Heart right ventricle (tissue), 16 donors: ENCODE measurements at regions of chrX and their contacts with region 1.

Region 1: GRCh38 chrX:43836435-43837184 is 45.6 kb downstream of the MAOB start:
- DNase-seq: no peak
- ATAC-seq: no peak
- H3K4me3 ChIP-seq: no peak overlapping the region
- H3K27ac ChIP-seq: no peak overlapping the region
- H3K4me1 ChIP-seq: peaks cover 0 to 10% (median 0%) of the 10 kb centered on the region in 9 donors
- H3K27me3 ChIP-seq: peaks cover 0 to 58% (median 0%) of the 10 kb centered on the region in 7 donors
- CTCF ChIP-seq: peak; percentile 19 to 71 (median 65)

Region 2: GRCh38 chrX:43618361-43619205 is 218.0 kb before region 1 on chrX:
- intact Hi-C with region 1: no loop called
- DNase-seq: no peak
- ATAC-seq: no peak
- H3K4me3 ChIP-seq: no peak overlapping the region
- H3K27ac ChIP-seq: no peak overlapping the region
- H3K4me1 ChIP-seq: no peaks in the 10 kb centered on the region
- H3K27me3 ChIP-seq: peaks cover 0 to 8% (median 0%) of the 10 kb centered on the region in 7 donors
- CTCF ChIP-seq: no peak

Region 3: DNA sequence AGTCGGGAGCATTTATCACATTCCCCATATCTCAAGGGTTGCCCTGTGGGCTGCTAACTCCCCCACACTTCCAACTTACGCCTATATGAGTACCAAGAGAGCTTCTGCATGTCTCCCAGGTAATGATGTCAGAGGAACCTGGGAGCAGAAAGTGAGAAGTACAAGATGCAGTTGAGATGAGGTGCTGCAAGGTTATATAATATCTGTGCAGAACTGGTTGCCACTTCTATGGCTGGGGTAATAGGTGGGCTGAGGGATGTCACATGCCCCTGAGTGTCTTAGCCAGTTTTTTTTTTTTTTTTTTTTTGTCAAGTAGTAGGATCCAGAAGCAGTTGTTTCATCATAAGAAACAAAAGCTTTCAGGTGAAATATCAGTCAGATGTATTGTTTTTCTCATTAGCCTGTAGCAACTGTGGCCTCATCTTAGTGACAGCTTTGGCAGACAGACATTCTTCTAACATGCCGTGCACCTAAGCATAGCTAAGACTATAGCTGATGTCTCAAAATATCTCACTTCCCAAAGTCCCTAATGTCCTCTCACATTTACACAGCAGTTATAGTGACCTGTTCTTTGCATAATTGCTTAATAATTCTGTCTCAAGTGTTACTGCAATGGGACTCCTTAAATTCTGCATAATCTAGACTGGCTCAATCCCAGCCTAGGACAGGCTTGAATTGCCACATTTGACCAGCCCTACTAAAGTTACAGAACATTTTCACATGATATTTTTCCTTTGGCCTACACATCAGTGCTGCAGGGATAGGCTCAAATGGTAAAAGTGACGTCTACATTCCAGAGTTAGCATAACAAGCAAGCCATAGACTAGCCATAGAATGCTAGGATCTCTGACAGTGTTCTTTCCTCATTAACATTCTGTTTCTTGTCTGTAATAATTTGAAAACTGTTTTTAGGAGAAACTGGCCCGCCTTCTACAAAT is 63.5 kb after region 1 on chrX:
- intact Hi-C with region 1: loop called in 1 of 10 experiments (anchors 10 kb)
- DNase-seq: no peak
- ATAC-seq: no peak
- H3K4me3 ChIP-seq: no peak overlapping the region
- H3K27ac ChIP-seq: no peak overlapping the region
- H3K4me1 ChIP-seq: peaks cover 0 to 10% (median 0%) of the 10 kb centered on the region in 9 donors
- H3K27me3 ChIP-seq: peaks cover 0 to 49% (median 0%) of the 10 kb centered on the region in 7 donors
- CTCF ChIP-seq: no peak

Region 4: GRCh38 chrX:43939187-43939926 is 102.7 kb after region 1 on chrX:
- intact Hi-C with region 1: loop called in 8 of 10 experiments (anchors 1 to 10 kb)
- DNase-seq: no peak
- ATAC-seq: peak in 2 of 8 donors; percentile 44 to 48
- H3K4me3 ChIP-seq: no peak overlapping the region
- H3K27ac ChIP-seq: no peak overlapping the region
- H3K4me1 ChIP-seq: no peaks in the 10 kb centered on the region
- H3K27me3 ChIP-seq: peaks cover 0 to 73% (median 0%) of the 10 kb centered on the region in 7 donors
- CTCF ChIP-seq: peak in 6 of 9 donors; percentile 18 to 54 (median 48)